Mammary epithelial cell (primary cell): ENCODE measurements at regions of chr18 and their contacts with region 1.

Region 1: DNA sequence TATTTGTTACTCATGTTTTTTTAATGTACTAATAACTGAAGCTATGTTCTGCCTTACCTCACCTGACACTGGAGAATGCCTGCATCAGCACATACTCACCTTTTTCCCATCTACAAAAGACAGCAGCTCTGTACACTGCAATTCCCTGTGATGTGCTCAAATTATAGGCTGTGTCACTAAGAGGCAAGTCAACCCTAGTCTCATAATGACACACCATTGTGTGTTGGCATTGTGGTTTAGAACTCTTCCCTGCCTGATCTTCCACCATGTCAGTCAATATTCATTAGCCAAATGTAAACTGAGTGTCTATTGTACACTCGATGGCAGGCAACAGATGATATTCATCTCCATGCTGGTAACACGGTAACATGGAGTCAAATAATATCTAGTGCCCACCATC is 332.1 kb upstream of the TCF4 start:
- DNase-seq: no peak
- H3K4me3 ChIP-seq: no peak overlapping the region
- H3K27ac ChIP-seq: no peak overlapping the region
- H3K4me1 ChIP-seq: no peaks in the 10 kb centered on the region
- H3K27me3 ChIP-seq: no peaks in the 10 kb centered on the region
- CTCF ChIP-seq: no peak

Region 2: GRCh38 chr18:55880617-55881016 is 39.4 kb before region 1 on chr18:
- CTCF ChIA-PET with region 1: no interaction called
- dilution Hi-C with region 1: loop called (anchors 5 kb)
- in situ Hi-C with region 1: no loop called
- intact Hi-C with region 1: no loop called
- DNase-seq: no peak
- H3K4me3 ChIP-seq: no peak overlapping the region
- H3K27ac ChIP-seq: no peak overlapping the region
- H3K4me1 ChIP-seq: no peaks in the 10 kb centered on the region
- H3K27me3 ChIP-seq: no peaks in the 10 kb centered on the region
- CTCF ChIP-seq: no peak

Region 3: GRCh38 chr18:56267334-56267733 is 347.3 kb after region 1 on chr18:
- CTCF ChIA-PET with region 1: no interaction called
- dilution Hi-C with region 1: no loop called
- in situ Hi-C with region 1: no loop called
- intact Hi-C with region 1: no loop called
- DNase-seq: no peak
- H3K4me3 ChIP-seq: no peak overlapping the region
- H3K27ac ChIP-seq: no peak overlapping the region
- H3K4me1 ChIP-seq: no peaks in the 10 kb centered on the region
- H3K27me3 ChIP-seq: no peaks in the 10 kb centered on the region
- CTCF ChIP-seq: no peak